ENCODE measurements at regions of chr17 and their contacts with region 1.

Region 1: GRCh38 chr17:51228161-51228560 is 31.7 kb downstream of the MBTD1 start:
- DNase-seq: no peak
- H3K4me3 ChIP-seq: no peak overlapping the region
- H3K27ac ChIP-seq: no peak overlapping the region
- H3K4me1 ChIP-seq: no peaks in the 10 kb centered on the region
- H3K27me3 ChIP-seq: no peaks in the 10 kb centered on the region
- CTCF ChIP-seq: no peak

Region 2: GRCh38 chr17:50355506-50356341 is 872.4 kb before region 1 on chr17:
- CTCF ChIA-PET with region 1: no interaction called
- POLR2A ChIA-PET with region 1: interaction called, 12 read pairs
- intact Hi-C with region 1: no loop called
- DNase-seq: no peak
- H3K4me3 ChIP-seq: no peak overlapping the region
- H3K27ac ChIP-seq: no peak overlapping the region
- H3K4me1 ChIP-seq: no peaks in the 10 kb centered on the region
- H3K27me3 ChIP-seq: no peaks in the 10 kb centered on the region
- CTCF ChIP-seq: no peak

Region 3: DNA sequence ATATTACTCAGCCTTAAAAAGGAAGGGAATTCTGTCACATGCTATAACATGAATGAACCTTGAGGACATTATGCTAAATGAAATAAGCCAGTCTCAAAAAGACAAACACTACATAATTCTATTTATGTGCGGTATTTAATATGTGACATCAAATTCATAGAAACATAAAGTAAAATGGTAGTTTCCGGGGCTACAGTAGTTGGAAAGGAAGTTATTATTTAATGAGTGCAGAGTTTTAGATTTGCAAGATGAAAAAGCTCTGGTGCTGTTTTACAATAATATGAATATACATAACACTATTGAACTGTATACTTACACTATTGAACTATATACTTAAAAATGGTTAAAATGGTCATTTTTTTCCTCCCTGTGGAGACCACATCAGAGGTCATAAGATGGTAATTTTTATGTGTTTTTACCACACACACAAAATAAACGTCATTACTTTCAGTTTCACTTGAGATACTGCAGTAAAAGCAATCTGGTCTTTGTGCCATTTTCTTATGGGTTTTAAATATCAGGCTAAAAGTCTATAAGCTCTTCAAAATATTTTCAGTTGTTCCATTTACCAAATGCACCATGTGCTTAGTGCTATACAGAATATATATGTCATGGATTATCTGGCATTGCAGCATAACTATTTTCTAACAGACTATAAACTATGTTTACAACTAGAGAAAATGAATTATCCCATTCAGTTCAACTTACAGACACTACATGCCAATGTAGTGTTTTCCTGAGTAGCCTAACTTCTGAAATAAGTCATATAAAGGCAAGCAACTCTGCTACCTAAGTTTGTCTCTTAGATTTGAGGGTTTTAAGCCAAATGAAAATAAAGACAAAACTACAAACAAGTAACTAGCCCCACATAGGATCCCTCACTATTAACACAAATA is 198.3 kb before region 1 on chr17:
- CTCF ChIA-PET with region 1: no interaction called
- POLR2A ChIA-PET with region 1: no interaction called
- intact Hi-C with region 1: no loop called
- DNase-seq: no peak
- H3K4me3 ChIP-seq: no peak overlapping the region
- H3K27ac ChIP-seq: no peak overlapping the region
- H3K4me1 ChIP-seq: no peaks in the 10 kb centered on the region
- H3K27me3 ChIP-seq: no peaks in the 10 kb centered on the region
- CTCF ChIP-seq: no peak

Region 4: GRCh38 chr17:51289696-51290111 is 61.5 kb after region 1 on chr17:
- CTCF ChIA-PET with region 1: no interaction called
- POLR2A ChIA-PET with region 1: interaction called, 22 read pairs
- intact Hi-C with region 1: no loop called
- DNase-seq: no peak
- H3K4me3 ChIP-seq: no peak overlapping the region
- H3K27ac ChIP-seq: no peak overlapping the region
- H3K4me1 ChIP-seq: no peaks in the 10 kb centered on the region
- H3K27me3 ChIP-seq: no peaks in the 10 kb centered on the region
- CTCF ChIP-seq: no peak